ENCODE measurements at regions of chr6 and their contacts with region 1.

Region 1: DNA sequence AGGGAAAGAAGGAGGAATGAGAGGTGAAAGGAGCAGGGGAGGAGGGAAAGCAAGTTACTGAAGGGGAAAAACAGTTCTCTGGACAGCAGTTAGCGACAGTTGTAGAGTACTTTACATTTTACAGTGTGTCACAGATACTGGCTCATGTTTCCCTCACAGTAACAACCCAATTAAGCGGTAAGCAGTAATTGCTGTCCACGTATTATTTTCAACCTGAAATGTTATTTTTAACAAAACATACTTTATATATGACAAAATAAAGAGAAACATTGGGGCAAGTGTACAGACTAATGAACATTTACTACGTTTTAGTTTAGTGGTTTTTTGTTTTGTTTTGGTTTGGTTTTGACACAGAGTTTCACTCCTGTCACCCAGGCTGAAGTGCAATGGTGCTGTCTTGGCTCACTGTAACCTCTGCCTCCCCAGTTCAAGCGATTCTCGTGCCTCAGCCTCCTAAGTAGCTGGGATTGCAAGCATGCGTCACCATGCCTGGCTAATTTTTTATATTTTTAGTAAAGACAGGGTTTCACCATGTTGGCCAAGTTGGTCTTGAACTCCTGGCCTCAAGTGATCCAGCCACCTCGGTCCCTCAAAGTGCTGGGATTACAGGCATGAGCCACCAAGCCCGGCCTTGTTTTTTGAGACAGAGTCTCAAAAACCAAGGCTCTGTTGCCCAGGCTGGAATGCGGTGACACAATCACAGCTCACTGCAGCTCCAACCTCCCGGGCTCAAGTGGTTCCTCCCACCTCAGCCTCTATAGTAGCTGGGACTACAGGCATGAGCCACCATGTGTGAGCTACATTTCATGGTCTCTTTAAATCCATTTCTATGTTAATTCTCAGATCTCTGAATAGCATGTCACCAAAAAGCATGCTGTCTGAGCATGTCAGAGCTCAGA is 22.6 kb upstream of the BTN3A2 start:
- DNase-seq: no peak
- H3K4me3 ChIP-seq: no peak overlapping the region
- H3K27ac ChIP-seq: no peak overlapping the region
- H3K4me1 ChIP-seq: peaks cover 0 to 7% (median 4%) of the 10 kb centered on the region in 4 donors
- H3K27me3 ChIP-seq: peaks cover 0 to 27% of the 10 kb centered on the region in 2 donors
- CTCF ChIP-seq: no peak

Region 2: DNA sequence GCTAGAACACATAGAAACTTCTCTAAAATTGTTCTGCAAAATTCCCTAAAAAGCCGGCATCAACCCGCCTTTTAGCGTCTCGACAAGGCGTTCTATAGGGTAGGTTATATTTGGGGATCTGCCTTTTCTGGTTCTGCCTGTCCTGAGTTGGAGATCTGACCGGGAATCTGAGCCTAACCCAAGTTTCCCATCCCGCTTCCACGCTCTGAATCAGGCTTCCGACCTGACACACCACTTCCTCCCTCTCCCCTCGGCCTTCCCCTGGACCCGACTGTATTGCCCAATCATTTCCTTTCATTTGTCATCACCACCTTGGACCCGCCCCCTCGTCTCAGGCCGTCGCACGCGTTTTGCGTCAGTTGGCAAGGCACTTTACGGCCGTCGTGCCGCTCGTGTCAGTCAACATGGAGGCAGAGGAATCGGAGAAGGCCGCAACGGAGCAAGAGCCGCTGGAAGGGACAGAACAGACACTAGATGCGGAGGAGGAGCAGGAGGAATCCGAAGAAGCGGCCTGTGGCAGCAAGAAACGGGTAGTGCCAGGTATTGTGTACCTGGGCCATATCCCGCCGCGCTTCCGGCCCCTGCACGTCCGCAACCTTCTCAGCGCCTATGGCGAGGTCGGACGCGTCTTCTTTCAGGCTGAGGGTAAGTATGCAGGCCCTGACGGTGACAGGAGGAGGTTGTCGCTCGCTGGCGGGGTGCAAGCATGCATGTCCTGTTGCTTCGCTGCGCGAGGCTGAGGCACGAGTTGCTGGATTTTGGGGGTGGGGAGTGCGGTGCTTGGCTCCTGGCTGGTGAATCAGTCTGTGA is 254.4 kb after region 1 on chr6 and contains the start of gene ABT1:
- intact Hi-C with region 1: loop called (anchors 5 kb)
- DNase-seq: peak; percentile 98 to 99
- H3K4me3 ChIP-seq: peak within 1 kb of the TSS; percentile 93 to 98
- H3K27ac ChIP-seq: peak within 1 kb of the TSS; percentile 91 to 94
- H3K4me1 ChIP-seq: peaks cover 0 to 17% (median 10%) of the 10 kb centered on the region in 4 donors
- H3K27me3 ChIP-seq: peaks cover 0 to 26% of the 10 kb centered on the region in 2 donors
- CTCF ChIP-seq: no peak